ENCODE measurements at regions of chrX and their contacts with region 1.

Region 1: DNA sequence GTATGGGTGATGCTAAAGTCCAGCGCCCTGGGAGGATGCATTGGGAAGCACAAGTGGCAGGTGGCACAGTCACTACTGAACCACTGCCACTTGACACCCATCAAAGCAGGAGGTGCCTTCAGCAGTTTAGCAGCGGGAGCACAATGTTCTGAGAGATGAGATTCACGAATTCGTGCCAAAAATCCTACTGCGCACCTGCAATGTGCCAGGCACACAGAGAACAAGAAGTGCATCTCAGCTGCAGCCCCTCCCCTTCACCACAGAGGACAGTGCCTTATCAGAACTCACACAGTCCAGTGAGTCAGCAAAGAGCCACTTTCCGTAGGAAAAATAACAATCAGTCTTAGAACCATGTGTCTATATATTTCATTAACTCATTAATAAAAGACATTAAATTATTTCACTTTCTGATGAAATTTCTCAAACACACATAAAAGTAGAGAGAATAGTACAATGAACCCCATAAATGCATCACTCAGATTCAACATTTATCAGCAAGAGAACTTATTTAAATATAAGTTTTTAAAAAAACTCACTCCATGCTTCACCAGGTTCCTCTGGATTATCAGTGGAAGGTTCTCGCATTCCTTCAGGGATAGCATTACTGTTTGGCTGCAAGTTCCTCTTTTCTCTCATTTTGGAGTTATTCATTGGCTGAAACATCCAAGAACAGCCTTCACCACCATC is 47.0 kb downstream of the BEND2 start:
- DNase-seq: peak; percentile 37
- ATAC-seq: peak; percentile 89 to 94

Region 2: GRCh38 chrX:17876164-17876563 is 297.5 kb before region 1 on chrX:
- intact Hi-C with region 1: no loop called
- DNase-seq: no peak
- ATAC-seq: no peak

Region 3: DNA sequence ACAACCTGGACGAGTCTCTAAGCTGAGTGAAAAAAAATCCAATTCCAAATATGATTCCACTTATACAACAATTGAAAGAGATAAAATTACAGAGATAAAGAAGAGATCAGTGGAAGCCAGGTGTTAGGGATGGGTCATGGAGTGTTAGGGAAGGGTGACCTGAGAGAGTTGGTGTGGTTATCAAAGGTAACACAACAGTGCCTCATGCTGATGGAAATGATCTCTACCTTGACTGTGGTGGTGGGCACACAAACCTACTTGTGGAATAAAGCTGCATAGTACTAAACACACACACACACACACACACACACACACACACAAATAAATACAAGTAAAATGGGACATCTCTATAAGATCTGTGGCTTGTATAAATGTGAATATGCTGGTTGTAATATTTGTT is 21.1 kb after region 1 on chrX:
- intact Hi-C with region 1: loop called in 1 of 2 experiments (anchors 2 kb)
- DNase-seq: no peak
- ATAC-seq: no peak

Region 4: DNA sequence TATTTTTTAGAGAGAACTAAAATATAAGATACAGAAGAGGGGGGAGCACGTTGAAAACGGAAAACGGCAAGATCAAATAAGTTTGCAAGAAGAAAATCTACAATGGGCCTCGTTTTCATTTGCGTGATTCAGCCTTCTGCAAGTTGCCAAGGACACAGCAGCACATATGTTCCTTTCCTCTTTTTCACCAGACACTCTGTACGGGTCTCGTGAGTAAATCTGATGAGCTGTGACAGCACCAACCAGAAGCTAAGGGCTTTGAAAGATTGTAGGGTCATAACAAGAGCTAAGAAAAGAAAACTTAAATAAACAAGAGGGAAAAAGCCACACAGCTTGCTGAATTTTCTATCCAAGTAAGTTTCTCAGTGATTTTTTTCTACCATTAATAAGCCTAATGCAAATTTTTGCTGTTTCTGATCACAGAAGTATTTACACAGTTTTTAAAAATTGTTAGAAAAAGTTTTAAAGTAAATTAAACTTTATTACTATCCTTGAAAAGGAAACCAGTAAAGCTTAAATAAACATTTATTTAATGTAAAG is 117.4 kb after region 1 on chrX:
- intact Hi-C with region 1: no loop called
- DNase-seq: no peak
- ATAC-seq: no peak

Measured in left cardiac atrium (tissue), 4 donors.